Aorta (tissue), 5 donors: ENCODE measurements at regions of chr3 and their contacts with region 1.

Region 1: GRCh38 chr3:150259526-150260397 is 148.3 kb upstream of the TSC22D2 start:
- DNase-seq: no peak
- ATAC-seq: no peak
- H3K4me3 ChIP-seq: no peak overlapping the region
- H3K27ac ChIP-seq: no peak overlapping the region
- H3K4me1 ChIP-seq: peaks cover 0 to 6% of the 10 kb centered on the region in 2 donors
- H3K27me3 ChIP-seq: no peaks in the 10 kb centered on the region

Region 2: DNA sequence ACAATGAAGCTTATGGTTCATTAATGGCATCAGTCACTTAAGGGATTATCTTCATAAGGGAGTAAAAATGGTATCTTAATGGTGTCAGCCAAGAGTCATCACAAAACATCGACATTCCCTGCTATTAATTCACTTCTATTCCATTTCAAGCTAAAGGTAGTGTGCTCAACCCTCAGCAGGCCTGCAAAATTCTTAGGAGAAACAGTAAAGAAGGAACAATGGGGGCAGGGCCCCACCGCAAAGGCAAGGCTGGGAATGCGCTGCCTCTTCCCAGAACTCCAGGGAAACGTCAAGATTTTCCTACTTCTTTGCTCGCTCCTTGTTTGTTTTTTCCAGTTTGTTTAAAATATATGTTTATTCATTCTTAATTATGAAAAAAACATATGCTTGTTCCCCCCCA is 39.0 kb before region 1 on chr3:
- intact Hi-C with region 1: no loop called
- DNase-seq: no peak
- ATAC-seq: no peak
- H3K4me3 ChIP-seq: peak overlapping the region; percentile 15 to 38
- H3K27ac ChIP-seq: no peak overlapping the region
- H3K4me1 ChIP-seq: peaks cover 0 to 3% of the 10 kb centered on the region in 2 donors
- H3K27me3 ChIP-seq: no peaks in the 10 kb centered on the region

Region 3: DNA sequence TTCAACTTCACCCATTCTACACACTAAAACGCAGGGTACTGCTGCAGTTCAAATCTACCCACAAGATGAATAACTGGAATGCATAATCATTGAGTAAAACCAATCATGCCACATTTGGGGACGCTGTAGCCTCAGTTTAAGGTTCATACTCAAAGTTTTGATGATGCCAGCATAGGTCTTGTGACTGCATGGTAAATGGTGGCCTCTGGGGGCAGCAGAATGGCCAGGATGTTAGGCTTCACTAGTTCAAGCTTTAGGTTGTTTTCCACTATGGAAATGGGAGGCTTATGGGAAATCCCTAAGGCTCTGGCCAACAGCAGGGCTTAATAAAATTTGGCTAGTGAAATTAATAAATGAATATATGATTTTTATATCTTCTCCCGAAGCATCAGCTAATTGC is 44.0 kb after region 1 on chr3:
- intact Hi-C with region 1: loop called in 1 of 2 experiments (anchors 2 kb)
- DNase-seq: no peak
- ATAC-seq: no peak
- H3K4me3 ChIP-seq: no peak overlapping the region
- H3K27ac ChIP-seq: no peak overlapping the region
- H3K4me1 ChIP-seq: peaks cover 0 to 4% of the 10 kb centered on the region in 2 donors
- H3K27me3 ChIP-seq: no peaks in the 10 kb centered on the region

Region 4: GRCh38 chr3:150555859-150556436 is 296.2 kb after region 1 on chr3:
- intact Hi-C with region 1: no loop called
- DNase-seq: no peak
- ATAC-seq: no peak
- H3K4me3 ChIP-seq: no peak overlapping the region
- H3K27ac ChIP-seq: no peak overlapping the region
- H3K4me1 ChIP-seq: no peaks in the 10 kb centered on the region
- H3K27me3 ChIP-seq: no peaks in the 10 kb centered on the region